ENCODE measurements at regions of chr16 and their contacts with region 1.

Region 1: DNA sequence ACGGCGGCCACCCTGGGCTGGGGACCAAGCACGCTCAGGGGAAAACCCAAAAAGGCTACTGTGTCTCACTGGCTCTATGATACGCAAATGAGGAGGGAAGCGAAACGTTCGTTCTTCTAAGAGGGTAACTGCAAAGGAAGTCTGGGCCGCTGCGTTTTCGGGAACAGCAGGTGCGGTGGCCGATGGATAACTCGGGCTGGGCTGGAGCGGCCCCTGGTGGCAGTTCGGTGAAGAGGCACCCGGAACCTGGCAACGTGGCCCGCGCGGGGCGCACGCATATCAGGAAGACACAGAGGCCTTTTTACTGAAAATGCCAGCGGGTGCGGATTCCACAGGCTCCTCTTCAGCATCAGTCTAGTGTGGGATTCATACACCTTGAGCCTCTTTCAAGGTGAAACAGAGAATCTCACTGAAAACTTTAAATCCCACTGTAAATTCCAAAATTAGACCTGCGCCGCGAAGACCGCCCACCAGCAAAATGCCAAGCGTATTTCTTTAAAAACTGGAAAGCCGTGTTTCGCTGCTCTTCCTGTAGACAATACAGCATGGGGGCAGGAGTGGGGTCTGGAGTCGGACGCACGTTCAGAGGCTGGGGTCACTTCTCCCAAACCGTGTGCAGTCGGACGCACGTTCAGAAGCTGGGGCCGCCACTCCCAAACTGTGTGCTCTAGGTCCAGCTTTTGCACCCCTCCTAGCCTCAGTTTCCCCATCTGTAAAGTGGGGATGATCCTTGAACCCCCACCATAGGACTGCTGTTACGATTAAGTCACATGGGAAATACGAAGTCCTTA is 44.4 kb upstream of the METTL9 start:
- DNase-seq: peak; percentile 86 to 96 (median 93)
- H3K4me3 ChIP-seq: peak overlapping the region in 56 of 59 donors; percentile 1 to 55 (median 37)
- H3K27ac ChIP-seq: peak overlapping the region in 13 of 59 donors; percentile 0 to 69 (median 29)
- H3K27me3 ChIP-seq: peaks cover 0 to 6% (median 0%) of the 10 kb centered on the region in 45 donors
- CTCF ChIP-seq: peak; percentile 93 to 100 (median 100)

Region 2: DNA sequence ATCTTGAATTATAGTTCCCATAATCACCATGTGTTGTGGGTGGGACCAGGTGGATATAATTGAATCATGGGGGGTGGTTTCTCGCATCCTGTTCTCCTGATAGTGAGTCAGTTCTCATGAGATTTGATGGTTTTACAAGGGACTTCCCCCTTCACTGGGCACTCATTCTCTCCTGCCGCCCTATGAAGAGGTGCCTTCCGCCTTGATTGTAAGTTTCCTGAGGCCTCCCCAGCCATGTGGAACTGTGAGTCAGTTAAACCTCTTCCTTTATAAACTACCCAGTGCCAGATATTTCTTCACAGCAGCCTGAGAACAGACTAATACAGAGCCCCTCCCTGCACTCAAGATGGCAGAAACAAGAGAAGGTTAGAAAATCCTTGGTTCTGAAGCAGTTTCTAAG is 370.2 kb before region 1 on chr16:
- intact Hi-C with region 1: loop called in 1 of 2 experiments (anchors 10 kb)
- DNase-seq: no peak
- H3K4me3 ChIP-seq: no peak overlapping the region
- H3K27ac ChIP-seq: no peak overlapping the region
- H3K27me3 ChIP-seq: no peaks in the 10 kb centered on the region
- CTCF ChIP-seq: no peak

Region 3: GRCh38 chr16:21501909-21502667 is 52.9 kb before region 1 on chr16:
- intact Hi-C with region 1: loop called in 1 of 2 experiments (anchors 5 kb)
- DNase-seq: peak; percentile 85 to 99 (median 93)
- H3K4me3 ChIP-seq: peak overlapping the region; percentile 58 to 100 (median 84)
- H3K27ac ChIP-seq: peak overlapping the region in 58 of 59 donors; percentile 7 to 98 (median 89)
- H3K27me3 ChIP-seq: no peaks in the 10 kb centered on the region
- CTCF ChIP-seq: peak in 52 of 56 donors; percentile 17 to 82 (median 51)